Activated T-helper 1 cell treated with anti-CD3 and anti-CD28 coated beads, Interleukin-12 subunit alpha, Interleukin-12 subunit beta, Interleukin-2, Interleukin-4 antibody, amounts not matched to agents 30 ng/mL and 10 ng/mL and 1 ng/mL, durations not matched to agents 14 hours and 24 hours and 36 hours (primary cell): ENCODE measurements at regions of chr20 and their contacts with region 1.

Region 1: GRCh38 chr20:3218307-3218988 is 9.2 kb downstream of the ITPA start:
- DNase-seq: peak; percentile 63
- H3K4me3 Mint-ChIP-seq: no peak overlapping the region
- H3K27ac Mint-ChIP-seq: no peak overlapping the region
- H3K4me1 Mint-ChIP-seq: peaks cover 6% of the 10 kb centered on the region
- H3K27me3 Mint-ChIP-seq: no peaks in the 10 kb centered on the region

Region 2: GRCh38 chr20:3276680-3277015 is 58.2 kb after region 1 on chr20:
- intact Hi-C with region 1: loop called (anchors 1 kb)
- DNase-seq: no peak
- H3K4me3 Mint-ChIP-seq: no peak overlapping the region
- H3K27ac Mint-ChIP-seq: no peak overlapping the region
- H3K4me1 Mint-ChIP-seq: no peaks in the 10 kb centered on the region
- H3K27me3 Mint-ChIP-seq: no peaks in the 10 kb centered on the region

Region 3: DNA sequence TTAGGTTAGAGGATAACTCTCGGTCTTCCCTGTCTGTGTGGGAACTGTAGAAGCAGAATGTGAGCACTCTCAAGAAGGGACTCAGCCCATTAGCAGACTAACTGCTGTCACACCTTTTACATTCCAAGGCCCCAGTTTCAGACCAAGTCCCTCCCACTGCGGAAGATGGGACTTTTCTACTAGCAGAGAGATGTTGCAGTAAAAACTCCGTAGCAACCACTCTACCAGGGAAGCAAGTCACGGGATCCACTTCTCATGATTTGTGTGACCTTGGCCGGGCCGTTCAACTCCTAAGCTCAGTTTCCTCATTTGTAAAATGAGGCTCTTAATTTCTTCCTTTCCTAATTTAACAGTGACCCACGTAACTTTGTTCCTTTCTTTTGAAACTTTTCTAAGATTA is 97.7 kb after region 1 on chr20:
- intact Hi-C with region 1: loop called (anchors 1 kb)
- DNase-seq: no peak
- H3K4me3 Mint-ChIP-seq: no peak overlapping the region
- H3K27ac Mint-ChIP-seq: no peak overlapping the region
- H3K4me1 Mint-ChIP-seq: no peaks in the 10 kb centered on the region
- H3K27me3 Mint-ChIP-seq: peaks cover 2% of the 10 kb centered on the region